Activated CD4-positive, alpha-beta T cell treated with anti-CD3 and anti-CD28 coated beads, Interleukin-2, amount 10 ng/mL, durations not matched to agents 24 days and 14 days (primary cell): ENCODE measurements at regions of chr19 and their contacts with region 1.

Region 1: DNA sequence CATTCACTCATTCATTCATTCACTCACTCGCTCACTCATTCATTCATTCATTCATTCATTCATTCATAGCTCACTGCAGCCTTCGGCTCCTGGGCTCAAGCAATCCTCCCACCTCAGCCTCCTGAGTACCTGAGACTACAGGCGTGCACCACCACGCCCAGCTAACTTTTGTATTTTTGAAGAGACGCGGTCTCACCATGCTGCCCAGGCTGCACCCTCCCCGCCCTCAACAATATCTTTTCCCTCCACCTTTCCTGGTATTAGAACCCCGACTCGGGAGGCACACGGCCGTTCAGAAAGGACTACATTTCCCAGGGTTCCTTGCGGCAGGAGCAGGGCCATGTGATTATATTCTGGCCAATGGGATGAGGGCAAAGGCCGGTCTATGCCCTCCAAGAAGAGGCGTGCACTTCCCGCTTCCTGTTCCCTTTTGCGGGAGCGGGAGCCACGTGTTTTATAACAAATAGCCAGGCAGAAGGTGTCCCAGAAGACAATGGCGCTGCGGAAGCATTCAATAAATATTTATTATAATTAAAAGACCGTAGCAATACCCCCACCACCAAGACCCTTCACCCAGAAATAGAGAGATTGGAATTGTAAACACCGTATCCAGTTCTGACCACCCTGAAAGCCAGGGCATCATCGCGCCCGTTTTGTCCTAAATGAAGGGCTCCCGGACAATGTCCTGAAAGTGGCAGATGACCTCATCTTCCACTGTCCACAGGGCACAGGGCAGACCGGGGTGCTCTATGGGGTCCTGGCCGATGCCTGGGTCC is 15.9 kb downstream of the TICAM1 start:
- DNase-seq: peak; percentile 93
- H3K4me3 Mint-ChIP-seq: peak overlapping the region; percentile 70
- H3K27ac Mint-ChIP-seq: peak overlapping the region; percentile 79
- H3K4me1 Mint-ChIP-seq: peaks cover 22% of the 10 kb centered on the region
- H3K27me3 Mint-ChIP-seq: no peaks in the 10 kb centered on the region

Region 2: GRCh38 chr19:4431808-4432674 is 383.6 kb before region 1 on chr19:
- intact Hi-C with region 1: no loop called
- DNase-seq: no peak
- H3K4me3 Mint-ChIP-seq: no peak overlapping the region
- H3K27ac Mint-ChIP-seq: no peak overlapping the region
- H3K4me1 Mint-ChIP-seq: no peaks in the 10 kb centered on the region
- H3K27me3 Mint-ChIP-seq: no peaks in the 10 kb centered on the region

Region 3: DNA sequence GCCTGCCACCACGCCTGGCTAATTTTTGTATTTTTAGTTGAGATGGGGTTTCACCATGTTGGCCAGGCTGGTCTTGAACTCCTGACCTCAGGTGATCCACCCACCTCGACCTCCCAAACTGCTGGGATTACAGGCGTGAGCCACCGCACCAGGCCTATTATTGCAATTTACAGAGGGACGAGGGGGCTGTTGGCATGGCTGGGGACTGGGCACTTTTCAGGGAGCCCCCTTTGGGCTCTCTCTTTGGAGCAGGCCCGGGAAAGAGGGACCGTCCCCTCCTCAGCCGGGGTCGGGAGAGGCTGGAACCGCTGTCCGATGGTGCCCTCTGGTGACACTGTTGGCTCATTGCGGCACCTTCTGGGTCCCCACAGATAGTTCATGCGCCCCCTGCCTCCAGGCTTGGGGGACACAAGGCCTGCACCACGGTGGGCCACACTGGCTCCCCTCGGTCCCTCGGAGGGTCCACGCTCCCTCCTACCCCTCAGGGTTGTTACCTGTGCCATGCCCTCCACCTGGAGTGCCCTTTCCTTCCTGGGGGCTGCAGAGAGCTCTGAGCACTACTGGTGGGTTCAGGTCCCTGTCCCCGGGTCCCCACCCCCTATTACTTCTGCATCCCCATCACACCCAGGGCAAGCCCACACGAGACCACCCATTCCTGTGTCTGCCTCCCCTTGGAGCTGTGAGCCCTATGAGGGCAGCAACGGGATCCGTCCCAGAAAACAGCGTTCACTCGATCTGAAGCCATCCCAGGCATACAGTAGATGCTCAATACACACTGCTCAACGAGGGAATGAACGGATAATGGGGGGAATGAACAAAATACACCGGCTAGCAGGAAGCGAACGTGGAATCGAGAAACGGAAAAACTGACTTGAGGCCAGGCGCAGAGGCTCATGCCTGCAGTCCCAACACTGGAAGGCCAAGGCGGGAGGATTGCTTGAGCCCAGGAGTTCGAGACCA is 11.6 kb before region 1 on chr19:
- intact Hi-C with region 1: no loop called
- DNase-seq: peak; percentile 90
- H3K4me3 Mint-ChIP-seq: no peak overlapping the region
- H3K27ac Mint-ChIP-seq: no peak overlapping the region
- H3K4me1 Mint-ChIP-seq: no peaks in the 10 kb centered on the region
- H3K27me3 Mint-ChIP-seq: no peaks in the 10 kb centered on the region

Region 4: GRCh38 chr19:4831304-4831978 is 15.8 kb after region 1 on chr19 and contains the start of gene TICAM1:
- intact Hi-C with region 1: loop called (anchors 2 kb)
- DNase-seq: peak; percentile 96
- H3K4me3 Mint-ChIP-seq: peak within 1 kb of the TSS; percentile 95
- H3K27ac Mint-ChIP-seq: peak within 1 kb of the TSS; percentile 93
- H3K4me1 Mint-ChIP-seq: peaks cover 22% of the 10 kb centered on the region
- H3K27me3 Mint-ChIP-seq: no peaks in the 10 kb centered on the region
- total RNA-seq, gene TICAM1: 33.8 and 33.9 TPM in 2 replicates

Region 5: GRCh38 chr19:4896372-4896771 is 80.8 kb after region 1 on chr19:
- intact Hi-C with region 1: no loop called
- DNase-seq: no peak
- H3K4me3 Mint-ChIP-seq: no peak overlapping the region
- H3K27ac Mint-ChIP-seq: no peak overlapping the region
- H3K4me1 Mint-ChIP-seq: no peaks in the 10 kb centered on the region
- H3K27me3 Mint-ChIP-seq: no peaks in the 10 kb centered on the region

Region 6: GRCh38 chr19:4933528-4933927 is 117.9 kb after region 1 on chr19:
- intact Hi-C with region 1: no loop called
- DNase-seq: no peak
- H3K4me3 Mint-ChIP-seq: no peak overlapping the region
- H3K27ac Mint-ChIP-seq: no peak overlapping the region
- H3K4me1 Mint-ChIP-seq: peaks cover 3% of the 10 kb centered on the region
- H3K27me3 Mint-ChIP-seq: no peaks in the 10 kb centered on the region